Dorsolateral prefrontal cortex (tissue), 120 donors: ENCODE measurements at regions of chr12 and their contacts with region 1.

Region 1: GRCh38 chr12:50763639-50764285 is at the start of gene ATF1:
- DNase-seq: peak; percentile 84 to 94 (median 90)
- H3K4me3 ChIP-seq: peak within 1 kb of the TSS; percentile 41 to 100 (median 95)
- H3K27ac ChIP-seq: peak within 1 kb of the TSS; percentile 87 to 99 (median 97)
- H3K27me3 ChIP-seq: no peaks in the 10 kb centered on the region
- CTCF ChIP-seq: peak in 35 of 56 donors; percentile 12 to 47 (median 27)
- total RNA-seq, gene ATF1: 11.9 to 34.8 (median 20.5) TPM

Region 2: DNA sequence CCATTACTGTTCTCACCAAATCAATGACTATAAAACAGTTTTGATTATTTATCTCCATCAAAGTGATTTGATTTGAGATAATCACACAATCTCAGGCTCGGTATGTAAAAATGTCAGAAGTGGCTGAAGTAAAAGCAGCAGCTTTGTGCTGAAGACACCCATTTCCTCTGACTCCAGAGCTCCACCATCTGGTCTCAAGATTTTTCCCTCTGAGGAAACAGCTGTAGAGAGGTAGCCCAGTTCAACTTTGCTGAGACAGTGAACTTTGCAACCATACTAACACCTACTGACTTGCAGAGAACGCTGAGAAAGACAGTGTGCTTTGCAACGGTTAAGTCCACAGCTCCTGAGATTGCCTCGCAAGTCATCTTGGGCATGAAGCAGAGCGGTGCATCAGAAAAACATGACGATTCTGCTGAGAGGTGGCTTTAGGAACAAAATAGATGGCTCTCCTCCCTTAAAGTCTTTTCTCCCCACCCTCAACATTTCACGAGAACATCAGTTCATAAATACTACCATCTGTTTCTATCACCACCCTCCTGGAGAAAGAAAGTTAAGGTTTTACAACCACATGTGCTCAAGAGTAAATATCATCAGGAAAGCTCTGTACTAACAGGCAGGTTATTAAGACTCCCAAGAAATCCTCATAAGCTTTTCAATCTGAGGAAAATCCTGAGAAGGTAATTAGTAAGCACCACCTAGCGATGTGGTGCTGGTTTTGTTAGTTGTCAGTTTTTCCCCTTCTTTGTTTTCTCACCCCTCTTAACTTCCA is 223.4 kb after region 1 on chr12:
- intact Hi-C with region 1: loop called (anchors 5 to 10 kb)
- DNase-seq: peak in 2 of 10 donors; percentile 23 to 60
- H3K4me3 ChIP-seq: peak overlapping the region in 1 of 59 donors; percentile 7
- H3K27ac ChIP-seq: peak overlapping the region in 49 of 59 donors; percentile 2 to 92 (median 61)
- H3K27me3 ChIP-seq: no peaks in the 10 kb centered on the region
- CTCF ChIP-seq: peak in 55 of 56 donors; percentile 39 to 82 (median 65)

Region 3: GRCh38 chr12:51009056-51009440 is 245.3 kb after region 1 on chr12:
- intact Hi-C with region 1: loop called in 1 of 2 experiments (anchors 5 kb)
- DNase-seq: peak; percentile 53 to 97 (median 94)
- H3K4me3 ChIP-seq: peak overlapping the region in 57 of 59 donors; percentile 0 to 64 (median 44)
- H3K27ac ChIP-seq: peak overlapping the region; percentile 82 to 100 (median 95)
- H3K27me3 ChIP-seq: no peaks in the 10 kb centered on the region
- CTCF ChIP-seq: peak in 14 of 56 donors; percentile 11 to 45 (median 22)

Region 4: DNA sequence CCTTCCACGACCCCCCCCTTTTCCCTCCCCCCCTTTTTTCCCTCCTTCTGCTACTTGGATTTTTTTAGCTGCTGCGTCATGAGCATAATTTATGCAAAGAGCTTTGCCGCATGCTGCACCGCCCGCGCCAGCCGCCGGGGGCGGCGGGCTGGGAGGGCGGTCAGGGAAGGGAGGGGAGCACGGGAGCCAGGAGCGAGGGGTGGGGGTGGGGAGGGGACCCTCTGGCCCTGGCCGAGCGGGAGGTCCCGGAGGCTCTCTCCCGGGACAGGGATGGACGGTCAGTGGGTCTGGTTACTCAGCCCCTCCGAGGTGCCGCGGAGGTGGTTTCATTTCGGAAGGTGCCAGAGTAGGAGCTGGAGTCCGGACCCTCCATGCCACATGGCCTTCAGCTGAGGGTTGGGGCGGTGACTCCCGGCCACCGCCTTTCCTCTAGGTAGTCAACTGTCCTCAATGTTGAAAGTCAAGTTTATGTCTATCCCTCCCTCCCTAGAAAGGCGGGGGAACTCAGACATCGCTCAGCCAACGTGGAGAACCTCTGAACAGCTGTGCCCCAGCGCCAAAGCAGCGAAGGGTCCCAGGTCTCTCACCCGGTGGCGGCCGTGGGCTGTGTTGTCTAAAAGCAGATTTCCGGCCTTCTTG is 454.3 kb after region 1 on chr12 and contains the start of gene POU6F1:
- intact Hi-C with region 1: loop called in 1 of 2 experiments (anchors 10 kb)
- DNase-seq: peak in 8 of 10 donors; percentile 35 to 79 (median 60)
- H3K4me3 ChIP-seq: peak within 1 kb of the TSS; percentile 56 to 96 (median 86)
- H3K27ac ChIP-seq: peak within 1 kb of the TSS; percentile 91 to 100 (median 98)
- H3K27me3 ChIP-seq: no peaks in the 10 kb centered on the region
- CTCF ChIP-seq: peak in 50 of 56 donors; percentile 13 to 63 (median 44)
- total RNA-seq, gene POU6F1: 55.9 to 145 (median 76.9) TPM